Activated CD8-positive, alpha-beta T cell treated with anti-CD3 and anti-CD28 coated beads, Interleukin-2, amount 10 ng/mL, durations not matched to agents 7 days and 5 days (primary cell): ENCODE measurements at regions of chr19 and their contacts with region 1.

Region 1: DNA sequence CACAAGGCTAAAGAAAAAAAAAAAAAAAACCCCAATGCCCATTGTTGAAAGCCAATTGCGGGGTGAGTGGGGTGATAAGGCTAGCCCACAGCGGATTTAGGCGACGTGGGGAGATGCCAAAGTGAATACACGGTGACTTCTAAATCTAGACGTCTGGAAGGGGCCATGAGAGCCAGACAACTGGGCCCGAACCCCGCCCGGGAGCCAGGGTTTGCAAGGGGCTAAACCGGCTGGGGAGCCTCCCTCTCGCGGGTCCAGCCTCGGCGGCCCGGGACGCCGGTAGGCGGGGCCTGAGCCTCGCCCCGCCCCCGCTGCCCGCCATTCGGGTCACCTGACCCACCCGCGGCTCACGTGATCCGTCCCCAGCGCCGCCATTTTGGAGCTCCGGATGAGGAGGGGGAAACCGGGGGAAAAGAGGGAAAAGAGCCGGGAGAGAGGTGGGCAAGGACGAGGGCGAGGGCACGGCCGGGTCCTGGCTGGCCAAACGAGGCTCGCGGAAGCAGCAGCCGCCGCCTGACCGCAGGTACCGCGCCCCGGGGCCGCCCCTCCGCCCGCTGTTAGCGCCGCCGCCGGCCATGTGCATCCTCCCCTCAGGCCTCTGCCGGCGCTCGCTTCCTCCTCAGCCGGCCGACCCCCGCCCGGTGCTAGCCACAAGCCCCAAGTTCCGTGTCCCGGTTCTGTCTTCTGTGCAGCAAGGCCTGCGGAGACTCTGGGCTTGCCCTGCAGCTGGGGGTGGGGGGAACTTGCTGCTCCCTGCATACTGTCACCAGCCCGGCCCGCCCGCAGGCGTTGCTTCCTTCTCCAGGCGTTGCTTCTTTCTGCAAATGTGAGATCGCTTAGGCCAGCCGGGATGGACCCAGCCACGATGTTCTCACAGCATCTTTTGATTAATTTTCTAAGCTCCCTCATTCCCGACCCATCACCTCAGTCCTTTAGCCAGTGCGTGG is at the start of gene ZNF507:
- DNase-seq: peak; percentile 88
- ATAC-seq: peak; percentile 91
- H3K4me3 Mint-ChIP-seq: peak within 1 kb of the TSS; percentile 95
- H3K27ac Mint-ChIP-seq: peak within 1 kb of the TSS; percentile 97
- H3K4me1 Mint-ChIP-seq: peaks cover 30% of the 10 kb centered on the region
- H3K27me3 Mint-ChIP-seq: peaks cover 5% of the 10 kb centered on the region
- total RNA-seq, gene ZNF507: 25.8 to 28.0 TPM

Region 2: GRCh38 chr19:32405431-32406161 is 60.1 kb after region 1 on chr19 and contains the start of gene DPY19L3:
- CTCF ChIA-PET with region 1: no interaction called
- POLR2A ChIA-PET with region 1: interaction called, 15 read pairs
- DNase-seq: peak; percentile 93
- ATAC-seq: peak; percentile 95
- H3K4me3 Mint-ChIP-seq: peak within 1 kb of the TSS; percentile 81
- H3K27ac Mint-ChIP-seq: peak within 1 kb of the TSS; percentile 93
- H3K4me1 Mint-ChIP-seq: peaks cover 17% of the 10 kb centered on the region
- H3K27me3 Mint-ChIP-seq: no peaks in the 10 kb centered on the region
- total RNA-seq, gene DPY19L3: 13.0 to 13.6 TPM